K562 (cell line): ENCODE measurements at regions of chr1 and their contacts with region 1.

Region 1: GRCh38 chr1:21685946-21686678 is 17.0 kb upstream of the RAP1GAP start:
- DNase-seq: no peak
- ATAC-seq: no peak
- H3K4me3 ChIP-seq: no peak overlapping the region
- H3K27ac ChIP-seq: peak overlapping the region; percentile 89; the same call in 2 of the 3 replicates
- H3K4me1 ChIP-seq: peaks cover 8 to 34% of the 10 kb centered on the region in 2 experiments; a peak in 4 of 5 replicates
- H3K27me3 ChIP-seq: no peaks in the 10 kb centered on the region
- CTCF ChIP-seq: no peak
- EP300 ChIP-seq: no peak
- POLR2A ChIP-seq: no peak
- RAD21 ChIP-seq: no peak

Region 2: DNA sequence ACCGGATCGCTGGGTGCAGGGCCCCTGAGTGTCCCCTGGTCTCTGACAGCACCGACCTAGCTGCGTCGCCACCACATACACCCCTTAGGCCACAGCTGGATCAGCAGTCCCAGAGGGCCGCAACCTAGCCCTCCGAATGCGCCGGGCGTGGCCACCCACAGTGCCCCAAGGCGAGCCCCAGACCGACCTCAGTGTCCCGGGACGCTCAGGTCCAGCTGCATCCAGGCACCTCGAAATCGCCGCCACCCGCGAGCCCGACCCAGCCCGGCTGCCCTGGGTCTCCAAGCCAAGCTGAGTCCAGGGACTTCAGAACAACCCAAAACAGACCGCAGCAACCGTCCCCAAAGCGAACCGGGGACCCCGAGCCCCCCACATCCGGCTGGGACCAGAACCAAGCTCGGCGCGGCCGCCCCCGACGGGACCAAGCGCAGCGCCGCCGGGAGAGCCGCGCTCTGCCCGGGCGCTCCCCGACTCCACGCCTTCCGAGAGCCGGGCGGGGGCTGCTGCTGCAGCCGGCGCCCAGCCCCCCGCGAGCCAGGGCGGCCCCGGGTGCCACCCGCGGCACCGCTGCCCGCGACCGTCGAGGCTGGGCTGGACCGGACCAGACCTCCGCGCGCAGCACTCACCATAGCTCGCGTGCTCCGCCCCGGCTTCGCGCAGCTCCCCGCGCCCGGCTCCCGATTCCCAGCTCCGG is 341.2 kb before region 1 on chr1:
- CTCF ChIA-PET with region 1: no interaction called
- POLR2A ChIA-PET with region 1: no interaction called
- in situ Hi-C with region 1: no loop called
- intact Hi-C with region 1: no loop called
- DNase-seq: peak in 2 of 4 experiments; percentile 41 to 45
- ATAC-seq: peak; percentile 16
- H3K4me3 ChIP-seq: peak overlapping the region; percentile 57
- H3K27ac ChIP-seq: peak overlapping the region; percentile 59; the same call in 2 of the 3 replicates
- H3K4me1 ChIP-seq: peaks cover 25 to 46% of the 10 kb centered on the region in 2 experiments
- H3K27me3 ChIP-seq: no peaks in the 10 kb centered on the region
- CTCF ChIP-seq: no peak
- EP300 ChIP-seq: no peak
- POLR2A ChIP-seq: no peak; the same call in 1 of the 2 replicates
- RAD21 ChIP-seq: no peak

Region 3: DNA sequence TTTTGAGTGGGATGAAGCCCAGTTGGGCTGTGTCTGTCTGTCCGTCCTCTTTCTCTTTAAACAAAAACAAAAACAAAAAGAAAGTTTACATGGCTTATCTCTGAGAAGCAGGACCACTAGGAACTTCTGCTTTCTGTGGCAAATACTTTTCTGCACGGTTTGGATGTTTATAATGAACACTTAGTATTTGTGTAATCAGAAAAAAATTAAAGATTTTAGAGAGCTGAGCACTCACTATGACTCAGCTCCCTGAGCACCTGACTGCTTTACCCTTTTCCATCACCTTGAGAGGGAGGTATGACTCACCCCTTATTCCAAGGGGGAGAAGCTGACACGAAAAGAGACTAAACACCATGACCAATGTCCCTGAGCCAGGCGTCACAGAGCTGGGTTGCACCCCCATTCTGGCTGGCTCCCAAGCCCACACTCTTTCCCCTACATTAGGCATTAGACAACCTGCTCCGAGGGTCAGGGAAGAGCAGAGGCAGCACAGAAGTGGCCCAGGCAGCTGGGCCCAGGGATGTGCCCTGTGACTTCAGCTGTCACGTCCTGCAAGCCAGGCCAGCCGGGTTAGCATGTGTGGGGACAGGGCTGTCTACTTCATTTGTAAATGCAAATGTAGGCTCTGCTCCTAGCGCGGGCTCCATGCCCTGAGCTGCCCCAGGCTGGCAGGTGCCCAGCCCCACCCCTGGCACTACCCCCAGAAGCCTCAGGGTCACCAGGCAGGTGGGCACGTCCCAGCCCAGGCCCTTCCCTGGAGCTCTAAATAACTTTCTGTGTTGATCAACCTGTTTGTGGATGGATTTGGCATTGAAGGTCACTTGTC is 47.4 kb before region 1 on chr1:
- CTCF ChIA-PET with region 1: no interaction called
- POLR2A ChIA-PET with region 1: no interaction called
- in situ Hi-C with region 1: no loop called
- intact Hi-C with region 1: no loop called
- DNase-seq: peak; percentile 79 to 89 (median 83)
- ATAC-seq: peak; percentile 81
- H3K4me3 ChIP-seq: no peak overlapping the region
- H3K27ac ChIP-seq: peak overlapping the region; percentile 78
- H3K4me1 ChIP-seq: peaks cover 44 to 59% of the 10 kb centered on the region in 2 experiments
- H3K27me3 ChIP-seq: no peaks in the 10 kb centered on the region
- CTCF ChIP-seq: no peak
- EP300 ChIP-seq: peak; percentile 72
- POLR2A ChIP-seq: no peak
- RAD21 ChIP-seq: no peak

Region 4: GRCh38 chr1:21674942-21675341 is 11.2 kb before region 1 on chr1:
- CTCF ChIA-PET with region 1: interaction called, 6 read pairs
- POLR2A ChIA-PET with region 1: interaction called, 13 read pairs
- in situ Hi-C with region 1: no loop called
- intact Hi-C with region 1: loop called (anchors 1 kb)
- DNase-seq: no peak
- ATAC-seq: no peak
- H3K4me3 ChIP-seq: no peak overlapping the region
- H3K27ac ChIP-seq: peak overlapping the region; percentile 71; the same call in 1 of the 3 replicates
- H3K4me1 ChIP-seq: peaks cover 35 to 60% of the 10 kb centered on the region in 2 experiments
- H3K27me3 ChIP-seq: no peaks in the 10 kb centered on the region
- CTCF ChIP-seq: no peak
- EP300 ChIP-seq: no peak
- POLR2A ChIP-seq: no peak
- RAD21 ChIP-seq: no peak